GM13976 (cell line): ENCODE measurements at regions of chr4 and their contacts with region 1.

Region 1: DNA sequence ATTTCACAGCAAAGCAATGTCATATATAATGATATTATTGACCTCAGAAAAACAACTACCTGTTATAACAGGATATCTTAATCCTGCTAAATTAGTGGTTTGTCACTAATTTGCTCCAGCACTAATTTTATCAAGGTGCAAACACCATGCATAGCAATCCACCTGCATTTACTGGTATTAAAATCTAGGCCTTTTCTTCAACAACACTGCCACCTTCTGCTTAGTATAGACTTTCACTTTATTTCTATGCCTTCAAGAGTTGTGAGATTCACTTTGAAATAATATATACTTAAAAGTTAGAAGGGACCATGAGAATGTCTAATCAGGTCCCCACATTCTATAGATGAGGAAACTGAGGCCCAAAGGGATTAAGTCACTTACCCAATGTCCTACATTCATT is 82.1 kb upstream of the IQCM start:
- DNase-seq: no peak
- CTCF ChIP-seq: no peak

Region 2: GRCh38 chr4:149398993-149399392 is 498.8 kb before region 1 on chr4:
- in situ Hi-C with region 1: loop called (anchors 25 kb)
- DNase-seq: no peak
- CTCF ChIP-seq: no peak

Region 3: GRCh38 chr4:150145090-150145949 is 247.5 kb after region 1 on chr4:
- in situ Hi-C with region 1: no loop called
- DNase-seq: no peak
- CTCF ChIP-seq: no peak